ENCODE measurements at regions of chr7 and their contacts with region 1.

Region 1: DNA sequence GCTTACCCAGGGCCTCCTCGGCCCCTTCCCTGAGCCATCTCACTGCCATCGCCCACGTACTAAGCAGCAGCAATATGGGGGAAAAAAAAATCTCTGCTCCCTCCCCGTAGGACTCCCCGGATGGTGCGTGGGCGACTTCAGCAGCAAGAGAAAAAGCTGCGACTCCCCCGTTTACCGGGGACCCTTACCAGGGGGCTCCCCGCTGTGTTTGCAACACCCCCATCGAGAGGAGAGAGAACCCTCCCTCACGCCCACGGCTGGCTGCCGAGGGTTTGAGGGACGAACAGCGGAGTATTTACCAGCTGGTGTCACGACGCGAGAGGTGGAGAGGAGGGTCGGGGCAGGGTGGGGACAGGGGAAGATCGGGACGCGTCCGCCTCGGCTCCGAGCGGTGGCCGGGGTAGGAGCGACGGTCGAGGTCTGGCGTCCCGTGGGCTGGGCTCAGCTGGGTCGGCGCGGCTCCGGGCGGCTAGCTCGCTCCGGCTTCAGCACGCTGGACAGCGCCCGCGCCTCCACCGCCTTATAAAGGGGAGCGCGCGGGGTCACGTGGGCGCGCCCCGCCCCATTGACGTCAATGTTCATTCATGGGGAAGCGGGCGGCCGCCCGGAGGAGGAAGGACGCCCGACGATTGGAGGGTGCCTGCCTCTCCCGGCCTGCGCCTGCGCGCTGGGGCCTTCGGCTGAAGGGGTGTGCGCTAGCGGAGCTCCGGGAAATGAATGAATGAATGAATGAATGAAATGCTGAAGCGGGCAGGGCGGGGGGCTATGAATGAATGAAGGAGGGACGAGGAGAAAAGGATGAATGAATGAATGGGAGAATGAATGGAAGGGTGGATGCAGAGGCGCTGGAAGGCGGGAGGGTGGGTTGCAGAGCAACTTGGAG is at the start of gene VGF:
- DNase-seq: peak; percentile 89
- H3K4me3 Mint-ChIP-seq: peak within 1 kb of the TSS; percentile 82
- H3K27ac Mint-ChIP-seq: no peak within 1 kb of the TSS
- H3K4me1 Mint-ChIP-seq: peaks cover 41% of the 10 kb centered on the region
- H3K27me3 Mint-ChIP-seq: peaks cover 51% of the 10 kb centered on the region
- total RNA-seq, gene VGF: 0.23 and 0.41 TPM in 2 replicates

Region 2: DNA sequence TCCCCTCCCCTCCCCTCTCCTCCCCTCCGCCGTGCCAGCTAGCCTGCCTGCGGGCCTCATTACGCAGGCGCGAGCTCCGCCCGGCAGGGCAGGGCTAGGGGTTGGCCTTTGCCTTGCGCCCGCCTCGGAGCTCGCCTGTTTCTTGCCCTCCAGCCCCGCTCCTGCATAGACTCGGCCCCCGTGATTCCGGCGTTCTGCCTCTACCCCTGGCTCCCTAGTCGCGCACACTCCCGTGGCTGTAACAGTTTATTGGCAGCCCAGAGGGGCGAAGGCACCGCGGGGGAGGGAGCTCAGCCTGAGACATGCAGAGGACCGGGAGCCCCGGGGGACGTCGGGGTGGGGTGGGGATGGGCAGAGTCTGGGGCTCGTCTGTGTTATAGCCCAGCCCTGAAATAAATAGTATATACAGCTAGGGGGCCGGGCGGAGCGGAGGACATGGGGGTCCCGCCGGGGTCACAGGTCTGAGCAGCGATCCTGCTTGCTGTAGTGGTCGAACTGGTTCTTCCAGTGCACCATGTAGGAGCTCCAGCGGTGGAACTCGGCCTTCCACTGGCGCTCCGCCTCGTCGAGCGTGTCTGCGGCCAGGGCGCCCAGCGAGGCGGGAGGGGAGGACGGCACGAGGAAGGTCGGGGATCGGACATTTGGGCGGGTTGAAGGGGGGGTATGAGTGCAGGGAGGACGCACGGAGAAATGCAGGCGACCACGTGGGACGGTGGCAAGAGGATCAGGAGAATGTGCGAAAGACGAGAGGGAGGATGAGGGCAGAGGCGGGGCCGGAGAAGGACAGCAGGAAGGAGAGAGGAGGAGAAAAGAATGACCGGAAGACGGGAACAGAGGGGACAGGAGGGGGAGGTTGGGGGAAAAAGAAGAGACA is 275.3 kb before region 1 on chr7:
- intact Hi-C with region 1: loop called (anchors 2 kb)
- DNase-seq: peak; percentile 88
- H3K4me3 Mint-ChIP-seq: peak overlapping the region; percentile 79
- H3K27ac Mint-ChIP-seq: no peak overlapping the region
- H3K4me1 Mint-ChIP-seq: peaks cover 42% of the 10 kb centered on the region
- H3K27me3 Mint-ChIP-seq: peaks cover 30% of the 10 kb centered on the region

Region 3: GRCh38 chr7:100965723-100966541 is 199.4 kb before region 1 on chr7:
- intact Hi-C with region 1: loop called (anchors 5 kb)
- DNase-seq: peak; percentile 73
- H3K4me3 Mint-ChIP-seq: peak overlapping the region; percentile 60
- H3K27ac Mint-ChIP-seq: no peak overlapping the region
- H3K4me1 Mint-ChIP-seq: peaks cover 10% of the 10 kb centered on the region
- H3K27me3 Mint-ChIP-seq: peaks cover 35% of the 10 kb centered on the region

Region 4: DNA sequence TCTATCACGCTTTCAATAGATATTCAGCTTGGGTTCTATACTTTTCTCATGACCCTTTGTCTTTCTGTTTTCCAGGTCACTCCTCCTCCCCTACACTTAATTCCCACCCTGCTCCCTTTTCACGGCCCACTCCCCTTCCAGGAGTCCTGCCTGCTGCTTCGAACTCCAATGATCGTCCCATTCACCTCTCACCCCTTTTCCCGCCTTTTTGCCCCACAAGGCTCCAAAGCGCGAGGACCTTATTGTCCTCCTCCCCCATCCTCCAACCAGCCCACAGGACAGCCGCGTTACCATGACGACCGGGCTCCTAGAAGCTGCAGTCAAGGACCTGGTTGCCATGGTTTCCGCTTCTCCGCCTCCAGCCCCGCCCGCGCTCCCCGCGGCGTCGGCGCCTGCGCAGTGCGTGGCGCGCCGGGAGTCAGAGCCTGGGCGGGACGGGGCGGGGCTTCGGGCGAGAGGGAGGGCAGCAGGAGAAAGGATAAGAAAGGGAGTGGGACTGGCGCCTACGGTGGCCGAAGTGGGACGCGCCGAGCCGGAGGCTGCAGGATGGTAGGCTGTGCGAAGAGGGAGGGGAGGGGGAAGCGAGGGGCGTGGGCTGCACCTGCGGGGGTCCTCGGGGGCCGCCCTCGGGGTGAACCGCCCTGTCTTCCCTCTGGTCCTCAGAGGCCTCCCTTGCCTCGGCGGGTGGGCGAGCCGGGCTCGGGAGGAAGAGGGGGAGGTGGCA is 11.2 kb before region 1 on chr7 and contains the start of gene AP1S1:
- intact Hi-C with region 1: loop called (anchors 1 kb)
- DNase-seq: peak; percentile 92
- H3K4me3 Mint-ChIP-seq: peak within 1 kb of the TSS; percentile 83
- H3K27ac Mint-ChIP-seq: peak within 1 kb of the TSS; percentile 74
- H3K4me1 Mint-ChIP-seq: peaks cover 13% of the 10 kb centered on the region
- H3K27me3 Mint-ChIP-seq: peaks cover 15% of the 10 kb centered on the region
- total RNA-seq, gene AP1S1: 41.8 and 42.8 TPM in 2 replicates

Region 5: GRCh38 chr7:101179118-101179517 is 13.8 kb after region 1 on chr7:
- intact Hi-C with region 1: loop called (anchors 1 kb)
- DNase-seq: no peak
- H3K4me3 Mint-ChIP-seq: no peak overlapping the region
- H3K27ac Mint-ChIP-seq: no peak overlapping the region
- H3K4me1 Mint-ChIP-seq: peaks cover 6% of the 10 kb centered on the region
- H3K27me3 Mint-ChIP-seq: peaks cover 69% of the 10 kb centered on the region

Region 6: GRCh38 chr7:101244375-101245146 is 79.2 kb after region 1 on chr7 and contains the start of gene FIS1:
- intact Hi-C with region 1: loop called (anchors 10 kb)
- DNase-seq: peak; percentile 91
- H3K4me3 Mint-ChIP-seq: peak within 1 kb of the TSS; percentile 92
- H3K27ac Mint-ChIP-seq: peak within 1 kb of the TSS; percentile 94
- H3K4me1 Mint-ChIP-seq: peaks cover 18% of the 10 kb centered on the region
- H3K27me3 Mint-ChIP-seq: no peaks in the 10 kb centered on the region
- total RNA-seq, gene FIS1: 121 and 132 TPM in 2 replicates

Region 7: GRCh38 chr7:101299511-101300464 is 134.5 kb after region 1 on chr7:
- intact Hi-C with region 1: loop called (anchors 5 kb)
- DNase-seq: no peak
- H3K4me3 Mint-ChIP-seq: no peak overlapping the region
- H3K27ac Mint-ChIP-seq: no peak overlapping the region
- H3K4me1 Mint-ChIP-seq: no peaks in the 10 kb centered on the region
- H3K27me3 Mint-ChIP-seq: peaks cover 46% of the 10 kb centered on the region